ENCODE measurements at regions of chr18 and their contacts with region 1.

Region 1: GRCh38 chr18:9136315-9137155 is at the start of gene ANKRD12:
- DNase-seq: peak; percentile 98
- H3K4me3 ChIP-seq: peak within 1 kb of the TSS; percentile 68
- H3K27ac ChIP-seq: peak within 1 kb of the TSS; percentile 69
- H3K4me1 ChIP-seq: peaks cover 23% of the 10 kb centered on the region
- H3K27me3 ChIP-seq: no peaks in the 10 kb centered on the region
- CTCF ChIP-seq: no peak
- total RNA-seq, gene ANKRD12: 23.7 and 24.2 TPM in 2 replicates

Region 2: GRCh38 chr18:8943900-8944870 is 192.3 kb before region 1 on chr18:
- CTCF ChIA-PET with region 1: no interaction called
- POLR2A ChIA-PET with region 1: no interaction called
- intact Hi-C with region 1: no loop called
- DNase-seq: no peak
- H3K4me3 ChIP-seq: no peak overlapping the region
- H3K27ac ChIP-seq: no peak overlapping the region
- H3K4me1 ChIP-seq: no peaks in the 10 kb centered on the region
- H3K27me3 ChIP-seq: no peaks in the 10 kb centered on the region
- CTCF ChIP-seq: no peak

Region 3: GRCh38 chr18:9102508-9103375 is 33.8 kb before region 1 on chr18 and contains the start of gene NDUFV2:
- CTCF ChIA-PET with region 1: no interaction called
- POLR2A ChIA-PET with region 1: no interaction called
- intact Hi-C with region 1: loop called (anchors 1 kb)
- DNase-seq: peak; percentile 98
- H3K4me3 ChIP-seq: peak within 1 kb of the TSS; percentile 68
- H3K27ac ChIP-seq: peak within 1 kb of the TSS; percentile 93
- H3K4me1 ChIP-seq: peaks cover 36% of the 10 kb centered on the region
- H3K27me3 ChIP-seq: no peaks in the 10 kb centered on the region
- CTCF ChIP-seq: no peak
- total RNA-seq, gene NDUFV2: 154 and 161 TPM in 2 replicates

Measured in A673 (cell line).